Psoas muscle (tissue), 8 donors: ENCODE measurements at regions of chr4 and their contacts with region 1.

Region 1: GRCh38 chr4:83034630-83035494 is at the start of gene COPS4:
- DNase-seq: peak; percentile 96 to 98
- ATAC-seq: peak; percentile 98 to 100 (median 100)
- H3K4me3 ChIP-seq: peak within 1 kb of the TSS; percentile 92
- H3K27ac ChIP-seq: peak within 1 kb of the TSS; percentile 92
- H3K4me1 ChIP-seq: peaks cover 21% of the 10 kb centered on the region
- H3K27me3 ChIP-seq: no peaks in the 10 kb centered on the region
- CTCF ChIP-seq: peak; percentile 34
- total RNA-seq, gene COPS4: 51.2 to 71.7 (median 65.8) TPM

Region 2: DNA sequence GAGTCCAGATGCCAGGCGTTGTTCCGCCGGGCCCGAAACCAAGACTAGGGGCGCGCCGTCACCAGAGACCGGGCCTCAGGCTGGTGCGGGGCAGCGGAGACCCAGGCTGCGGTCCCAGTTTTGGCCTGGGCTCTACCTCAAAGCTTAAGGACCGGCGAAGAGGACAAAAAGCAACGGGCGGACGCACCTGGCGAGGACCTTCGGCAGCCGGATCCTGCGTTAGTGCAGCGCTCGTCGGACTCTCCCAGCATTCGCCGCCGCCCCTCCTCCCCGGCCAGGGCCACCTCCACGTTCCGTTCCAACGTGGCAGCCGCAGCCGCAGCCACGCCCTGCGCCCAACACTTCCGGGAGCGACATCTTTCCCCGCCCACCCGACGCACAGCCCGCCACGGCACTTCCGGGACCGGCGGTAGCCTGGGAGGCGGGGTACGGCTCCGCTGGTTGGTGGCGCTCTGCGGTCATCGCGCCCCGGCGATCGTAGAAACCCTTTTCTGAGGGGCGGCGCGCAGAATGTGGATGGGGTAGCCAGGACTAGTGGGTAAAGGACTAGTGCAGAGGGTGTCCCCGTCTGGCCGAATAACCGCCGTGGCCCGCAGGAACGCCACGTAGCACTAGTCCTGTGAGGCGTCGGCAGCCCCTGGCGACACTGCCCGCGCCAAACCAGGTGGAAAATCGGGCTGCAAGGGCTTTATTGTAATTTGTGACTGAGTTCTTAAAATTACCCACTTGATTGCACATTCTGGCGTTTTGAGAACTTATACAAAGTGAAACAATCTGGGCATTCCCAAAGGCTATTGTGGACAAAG is 143.8 kb before region 1 on chr4 and contains the start of gene SEC31A:
- intact Hi-C with region 1: loop called in 1 of 2 experiments (anchors 10 kb)
- DNase-seq: peak; percentile 96 to 98
- ATAC-seq: peak; percentile 97 to 99 (median 98)
- H3K4me3 ChIP-seq: peak within 1 kb of the TSS; percentile 66
- H3K27ac ChIP-seq: peak within 1 kb of the TSS; percentile 86
- H3K4me1 ChIP-seq: peaks cover 31% of the 10 kb centered on the region
- H3K27me3 ChIP-seq: no peaks in the 10 kb centered on the region
- CTCF ChIP-seq: no peak
- total RNA-seq, gene SEC31A: 94.6 to 117 (median 106) TPM

Region 3: DNA sequence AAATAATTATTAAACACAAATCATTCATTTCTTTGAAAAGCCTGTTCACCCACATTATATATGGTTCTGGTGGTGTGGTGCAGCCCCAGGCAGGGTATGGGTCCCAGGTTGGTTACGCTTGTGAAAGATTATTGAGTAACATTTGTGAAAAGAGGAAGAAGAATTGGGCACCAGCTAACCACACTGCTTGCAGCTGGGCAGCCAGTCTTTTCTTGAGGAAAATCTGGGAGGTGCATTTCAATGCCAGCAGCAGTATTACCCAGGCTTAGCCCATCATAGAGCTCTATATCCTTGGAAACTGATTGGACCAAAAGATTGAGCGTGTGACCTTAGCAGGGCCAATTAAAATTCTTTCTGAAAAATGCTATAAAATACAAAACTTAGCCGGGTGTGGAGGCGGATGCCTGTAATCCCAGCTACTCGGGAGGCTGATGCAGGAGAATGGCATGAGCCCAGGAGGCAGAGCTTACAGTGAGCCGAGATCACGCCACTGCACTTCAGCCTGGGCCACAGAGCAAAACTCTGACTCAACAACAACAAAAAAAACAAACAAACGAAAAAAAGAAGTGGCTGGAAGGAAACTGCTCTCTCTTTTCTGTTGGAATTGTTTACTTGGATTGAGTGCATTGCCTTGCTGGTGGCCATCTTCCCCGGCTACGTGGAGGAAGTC is 89.4 kb after region 1 on chr4:
- intact Hi-C with region 1: no loop called
- DNase-seq: no peak
- ATAC-seq: no peak
- H3K4me3 ChIP-seq: no peak overlapping the region
- H3K27ac ChIP-seq: no peak overlapping the region
- H3K4me1 ChIP-seq: no peaks in the 10 kb centered on the region
- H3K27me3 ChIP-seq: no peaks in the 10 kb centered on the region
- CTCF ChIP-seq: no peak